ENCODE measurements at regions of chr6 and their contacts with region 1.

Region 1: DNA sequence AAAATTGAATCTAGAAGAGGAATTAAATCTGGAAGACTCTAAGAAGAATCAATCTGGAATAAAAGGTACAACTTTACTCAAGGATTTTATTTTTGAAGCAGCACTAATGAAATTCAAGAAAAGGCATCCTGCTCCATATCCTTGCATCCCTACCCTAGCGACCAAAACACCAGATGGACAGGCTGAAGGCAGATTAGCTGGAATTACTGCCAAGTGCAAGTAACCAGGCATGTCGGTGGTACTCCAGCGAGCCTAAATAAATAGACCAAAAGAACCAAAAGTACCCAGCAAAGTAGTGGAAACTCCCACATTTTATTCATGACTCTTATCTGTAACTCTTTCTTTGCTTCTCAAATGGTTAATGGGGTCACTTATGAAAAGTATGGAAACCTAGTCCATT is 21.0 kb downstream of the OPRM1 start:
- DNase-seq: no peak
- ATAC-seq: no peak

Region 2: DNA sequence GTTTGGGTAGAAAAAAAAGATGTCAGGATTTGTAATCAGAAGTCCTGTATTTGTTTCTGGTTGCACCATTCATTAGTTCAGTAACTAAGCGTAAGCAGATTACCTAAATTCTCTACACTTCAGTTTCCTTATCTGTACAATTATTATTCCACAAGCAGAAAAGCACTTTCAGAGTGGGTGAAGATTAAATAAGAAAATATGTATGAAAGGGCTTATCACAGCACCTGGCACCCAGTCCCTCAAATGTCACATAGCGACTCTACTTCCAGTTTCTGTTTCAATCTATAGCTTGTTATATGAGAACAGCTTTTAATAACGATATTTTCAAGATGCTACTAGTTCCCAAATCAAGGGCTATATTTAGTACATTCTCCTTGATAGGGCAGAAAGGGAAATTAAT is 960.4 kb before region 1 on chr6:
- intact Hi-C with region 1: loop called (anchors 5 kb)
- DNase-seq: no peak
- ATAC-seq: no peak